ENCODE measurements at regions of chr12 and their contacts with region 1.

Region 1: GRCh38 chr12:47270782-47271664 is 191.3 kb upstream of the AMIGO2 start:
- DNase-seq: peak; percentile 97
- H3K4me3 ChIP-seq: no peak overlapping the region
- H3K27ac ChIP-seq: peak overlapping the region; percentile 99
- H3K4me1 ChIP-seq: peaks cover 68% of the 10 kb centered on the region
- H3K27me3 ChIP-seq: no peaks in the 10 kb centered on the region
- CTCF ChIP-seq: no peak

Region 2: GRCh38 chr12:46131729-46132469 is 1139.1 kb before region 1 on chr12:
- CTCF ChIA-PET with region 1: no interaction called
- dilution Hi-C with region 1: no loop called
- in situ Hi-C with region 1: no loop called
- intact Hi-C with region 1: no loop called
- DNase-seq: no peak
- H3K4me3 ChIP-seq: no peak overlapping the region
- H3K27ac ChIP-seq: no peak overlapping the region
- H3K4me1 ChIP-seq: no peaks in the 10 kb centered on the region
- H3K27me3 ChIP-seq: no peaks in the 10 kb centered on the region
- CTCF ChIP-seq: peak; percentile 19 to 27

Region 3: DNA sequence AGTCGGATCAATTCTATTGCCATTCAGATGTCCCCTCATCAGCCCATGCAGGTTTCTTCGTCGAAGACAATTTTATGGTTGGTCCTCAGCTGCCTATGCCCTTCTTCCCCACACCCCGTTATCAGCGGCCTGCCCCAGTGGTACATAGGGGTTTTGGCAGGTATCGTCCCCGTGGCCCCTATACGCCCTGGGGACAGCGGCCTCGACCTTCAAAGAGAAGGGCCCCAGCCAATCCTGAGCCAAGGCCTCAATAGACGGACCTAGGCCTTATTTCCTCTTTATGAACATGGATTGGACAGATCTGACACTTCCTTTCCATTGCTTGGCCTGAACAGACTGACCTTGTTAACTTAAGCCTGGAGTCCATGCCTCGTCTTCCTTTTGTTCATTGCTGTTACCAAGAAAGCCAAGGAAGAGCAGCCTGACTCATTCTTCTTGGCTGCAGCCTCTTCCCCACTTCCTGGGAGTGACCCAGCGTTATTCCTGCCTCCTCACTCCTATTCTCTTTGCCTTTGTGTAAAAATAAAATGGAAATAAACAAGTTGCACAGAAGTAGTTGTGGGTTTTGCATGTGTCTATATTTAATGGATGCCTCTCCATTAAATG is 34.8 kb before region 1 on chr12:
- CTCF ChIA-PET with region 1: interaction called, 10 read pairs
- dilution Hi-C with region 1: no loop called
- in situ Hi-C with region 1: no loop called
- intact Hi-C with region 1: loop called (anchors 2 kb)
- DNase-seq: peak; percentile 86
- H3K4me3 ChIP-seq: no peak overlapping the region
- H3K27ac ChIP-seq: peak overlapping the region; percentile 67
- H3K4me1 ChIP-seq: peaks cover 31% of the 10 kb centered on the region
- H3K27me3 ChIP-seq: no peaks in the 10 kb centered on the region
- CTCF ChIP-seq: no peak

Region 4: GRCh38 chr12:47491516-47492305 is 220.7 kb after region 1 on chr12:
- CTCF ChIA-PET with region 1: no interaction called
- dilution Hi-C with region 1: no loop called
- in situ Hi-C with region 1: no loop called
- intact Hi-C with region 1: no loop called
- DNase-seq: peak; percentile 13
- H3K4me3 ChIP-seq: no peak overlapping the region
- H3K27ac ChIP-seq: no peak overlapping the region
- H3K4me1 ChIP-seq: no peaks in the 10 kb centered on the region
- H3K27me3 ChIP-seq: peaks cover 4% of the 10 kb centered on the region
- CTCF ChIP-seq: no peak